ENCODE measurements at regions of chr13 and their contacts with region 1.

Region 1: GRCh38 chr13:40653527-40654318 is 12.7 kb downstream of the FOXO1 start:
- DNase-seq: peak; percentile 43
- H3K4me3 Mint-ChIP-seq: peak overlapping the region; percentile 70
- H3K27ac Mint-ChIP-seq: peak overlapping the region; percentile 89
- H3K4me1 Mint-ChIP-seq: peaks cover 90% of the 10 kb centered on the region
- H3K27me3 Mint-ChIP-seq: no peaks in the 10 kb centered on the region

Region 2: DNA sequence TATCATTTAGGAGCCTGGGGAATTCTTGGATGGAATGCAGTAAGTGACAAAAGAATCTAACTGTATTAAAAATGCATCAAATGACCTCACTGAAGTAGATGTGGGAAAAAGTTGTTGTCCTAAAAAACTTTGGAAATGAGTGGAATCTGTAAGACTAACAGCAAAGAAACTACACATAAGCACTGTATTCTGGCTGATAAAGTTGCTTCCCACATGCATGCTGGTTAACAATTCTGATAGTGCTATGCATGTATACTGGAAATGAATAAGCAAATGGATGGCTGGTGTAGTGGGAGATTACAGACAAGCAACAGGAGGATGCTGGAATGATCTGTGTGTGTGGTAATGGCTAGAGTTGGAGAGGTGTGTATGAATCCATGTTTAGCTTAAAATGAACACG is 125.8 kb before region 1 on chr13:
- CTCF ChIA-PET with region 1: no interaction called
- POLR2A ChIA-PET with region 1: no interaction called
- intact Hi-C with region 1: no loop called
- DNase-seq: no peak
- H3K4me3 Mint-ChIP-seq: no peak overlapping the region
- H3K27ac Mint-ChIP-seq: no peak overlapping the region
- H3K4me1 Mint-ChIP-seq: peaks cover 22% of the 10 kb centered on the region
- H3K27me3 Mint-ChIP-seq: no peaks in the 10 kb centered on the region

Region 3: GRCh38 chr13:40597740-40598370 is 55.9 kb before region 1 on chr13:
- CTCF ChIA-PET with region 1: interaction called, 4 read pairs
- POLR2A ChIA-PET with region 1: interaction called, 4 read pairs
- intact Hi-C with region 1: loop called (anchors 2 kb)
- DNase-seq: peak; percentile 24
- H3K4me3 Mint-ChIP-seq: peak overlapping the region; percentile 39
- H3K27ac Mint-ChIP-seq: peak overlapping the region; percentile 85
- H3K4me1 Mint-ChIP-seq: peaks cover 87% of the 10 kb centered on the region
- H3K27me3 Mint-ChIP-seq: no peaks in the 10 kb centered on the region

Measured in activated CD4-positive, alpha-beta memory T cell treated with anti-CD3 and anti-CD28 coated beads for 36 hours (primary cell).